ENCODE measurements at regions of chr10 and their contacts with region 1.

Region 1: GRCh38 chr10:13371897-13372470 is 23.9 kb upstream of the SEPHS1 start:
- DNase-seq: no peak
- ATAC-seq: peak; percentile 99
- H3K4me3 ChIP-seq: no peak overlapping the region
- H3K27ac ChIP-seq: no peak overlapping the region
- H3K4me1 ChIP-seq: no peaks in the 10 kb centered on the region
- H3K27me3 ChIP-seq: no peaks in the 10 kb centered on the region
- CTCF ChIP-seq: peak; percentile 90 to 99 (median 95)
- EP300 ChIP-seq: no peak
- POLR2A ChIP-seq: no peak
- RAD21 ChIP-seq: peak; percentile 97

Region 2: DNA sequence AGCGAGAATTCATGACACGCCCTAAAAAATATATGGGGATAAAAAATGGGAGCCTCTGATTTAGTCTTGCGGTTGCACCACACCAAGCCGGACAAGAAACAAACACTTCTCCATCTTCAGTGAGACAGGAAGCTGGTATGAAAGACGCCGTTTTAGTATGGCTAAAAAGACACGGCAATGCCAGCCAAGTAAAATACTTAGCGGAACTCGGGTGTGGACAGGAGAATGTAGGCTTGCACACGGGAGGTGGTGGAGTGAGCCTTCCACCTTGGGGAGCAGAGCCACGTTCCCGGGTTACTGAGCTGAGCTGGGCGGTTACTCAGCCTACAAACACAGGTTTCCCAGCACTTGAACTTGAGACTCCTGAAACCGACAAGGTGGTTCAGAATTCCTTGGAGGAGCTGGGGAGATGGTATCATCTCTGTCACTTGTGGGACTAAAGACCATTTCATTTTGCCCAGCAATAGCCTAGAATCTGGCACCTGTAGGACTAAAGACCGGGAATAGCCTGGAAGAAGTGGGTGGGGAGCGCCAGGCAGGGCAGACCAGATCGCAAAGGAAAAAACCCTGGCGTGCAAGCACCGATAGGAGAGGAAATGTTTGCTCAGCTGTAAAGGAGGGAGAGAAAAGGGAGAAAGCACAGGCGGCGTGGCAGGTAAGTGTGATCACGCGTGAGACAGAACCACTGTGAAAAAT is 10.9 kb after region 1 on chr10:
- CTCF ChIA-PET with region 1: interaction called, 12 read pairs
- POLR2A ChIA-PET with region 1: no interaction called
- RAD21 ChIA-PET with region 1: interaction called, 3 read pairs
- SMC1A ChIA-PET with region 1: interaction called, 5 read pairs
- in situ Hi-C with region 1: no loop called
- intact Hi-C with region 1: no loop called
- DNase-seq: no peak
- ATAC-seq: no peak
- H3K4me3 ChIP-seq: no peak overlapping the region
- H3K27ac ChIP-seq: no peak overlapping the region
- H3K4me1 ChIP-seq: no peaks in the 10 kb centered on the region
- H3K27me3 ChIP-seq: peaks cover 0 to 3% of the 10 kb centered on the region in 2 experiments; a peak in 1 of 4 replicates
- CTCF ChIP-seq: no peak
- EP300 ChIP-seq: no peak
- POLR2A ChIP-seq: no peak
- RAD21 ChIP-seq: no peak

Region 3: GRCh38 chr10:13440185-13441061 is 68.4 kb after region 1 on chr10:
- CTCF ChIA-PET with region 1: interaction called, 41 read pairs
- POLR2A ChIA-PET with region 1: no interaction called
- RAD21 ChIA-PET with region 1: interaction called, 9 read pairs
- SMC1A ChIA-PET with region 1: interaction called, 9 read pairs
- in situ Hi-C with region 1: loop called (anchors 5 kb)
- intact Hi-C with region 1: loop called (anchors 1 kb)
- DNase-seq: no peak
- ATAC-seq: peak; percentile 95
- H3K4me3 ChIP-seq: no peak overlapping the region
- H3K27ac ChIP-seq: no peak overlapping the region
- H3K4me1 ChIP-seq: 0 out of 2 replicates have a peak, but pooled peaks cover 3% of the 10 kb centered on the region
- H3K27me3 ChIP-seq: peaks cover 8 to 9% of the 10 kb centered on the region in 2 experiments; a peak in 3 of 4 replicates
- CTCF ChIP-seq: peak; percentile 72 to 81 (median 80)
- EP300 ChIP-seq: no peak
- POLR2A ChIP-seq: no peak
- RAD21 ChIP-seq: peak; percentile 50

Region 4: GRCh38 chr10:13518076-13518692 is 146.2 kb after region 1 on chr10:
- CTCF ChIA-PET with region 1: interaction called, 6 read pairs
- POLR2A ChIA-PET with region 1: no interaction called
- RAD21 ChIA-PET with region 1: no interaction called
- SMC1A ChIA-PET with region 1: interaction called, 3 read pairs
- in situ Hi-C with region 1: no loop called
- intact Hi-C with region 1: loop called (anchors 1 kb)
- DNase-seq: no peak
- ATAC-seq: peak; percentile 80
- H3K4me3 ChIP-seq: no peak overlapping the region
- H3K27ac ChIP-seq: no peak overlapping the region
- H3K4me1 ChIP-seq: no peaks in the 10 kb centered on the region
- H3K27me3 ChIP-seq: peaks cover 0 to 3% of the 10 kb centered on the region in 2 experiments; a peak in 1 of 4 replicates
- CTCF ChIP-seq: peak; percentile 4 to 55 (median 53); a peak in 4 of 6 replicates
- EP300 ChIP-seq: no peak
- POLR2A ChIP-seq: no peak
- RAD21 ChIP-seq: peak; percentile 37; the same call in 1 of the 2 replicates

Region 5: DNA sequence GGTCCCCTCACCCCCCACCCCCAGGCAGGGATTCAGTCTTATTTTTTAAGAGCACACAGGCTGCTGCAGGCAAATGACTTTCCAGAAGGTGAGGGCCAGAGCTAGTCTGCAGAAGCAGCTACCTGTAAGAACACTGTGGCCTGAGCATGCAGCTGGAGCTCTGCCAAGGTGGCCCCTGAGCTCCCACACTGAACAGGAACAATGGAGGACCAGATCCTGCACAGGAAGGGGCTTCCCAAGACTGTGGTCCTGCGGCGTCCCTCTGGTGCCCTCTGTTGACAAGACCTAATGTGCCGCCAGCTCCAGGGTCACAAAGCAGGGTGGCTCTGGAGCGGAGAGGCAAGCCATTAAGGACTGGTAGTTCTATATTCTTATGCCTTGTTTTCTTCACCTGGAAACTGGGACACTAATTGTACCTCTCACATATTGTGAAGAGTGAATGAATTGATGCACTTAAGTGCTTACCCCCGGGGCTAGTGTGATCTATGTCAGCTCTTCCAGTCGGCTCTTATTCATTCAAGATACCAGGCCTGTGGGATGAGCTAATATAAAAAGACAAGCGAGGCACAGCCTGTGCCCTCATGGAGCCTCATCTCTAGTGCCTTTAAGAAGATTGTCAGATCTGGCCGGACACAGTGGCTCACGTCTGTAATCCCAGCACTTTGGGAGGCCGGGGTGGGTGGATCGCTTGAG is 164.8 kb after region 1 on chr10:
- CTCF ChIA-PET with region 1: interaction called, 24 read pairs
- POLR2A ChIA-PET with region 1: no interaction called
- RAD21 ChIA-PET with region 1: interaction called, 12 read pairs
- SMC1A ChIA-PET with region 1: interaction called, 12 read pairs
- in situ Hi-C with region 1: loop called (anchors 5 kb)
- intact Hi-C with region 1: loop called (anchors 1 kb)
- DNase-seq: peak; percentile 16
- ATAC-seq: peak; percentile 98
- H3K4me3 ChIP-seq: no peak overlapping the region
- H3K27ac ChIP-seq: no peak overlapping the region
- H3K4me1 ChIP-seq: no peaks in the 10 kb centered on the region
- H3K27me3 ChIP-seq: 0 out of 4 replicates have a peak, but pooled peaks cover 0 to 3% of the 10 kb centered on the region in 2 experiments
- CTCF ChIP-seq: peak; percentile 69 to 79 (median 74)
- EP300 ChIP-seq: no peak
- POLR2A ChIP-seq: no peak
- RAD21 ChIP-seq: peak; percentile 67

Region 6: GRCh38 chr10:13586676-13587355 is 214.8 kb after region 1 on chr10 and contains the start of gene PRPF18:
- CTCF ChIA-PET with region 1: interaction called, 13 read pairs
- POLR2A ChIA-PET with region 1: no interaction called
- RAD21 ChIA-PET with region 1: interaction called, 4 read pairs
- SMC1A ChIA-PET with region 1: interaction called, 4 read pairs
- in situ Hi-C with region 1: no loop called
- intact Hi-C with region 1: loop called (anchors 1 kb)
- DNase-seq: peak; percentile 76
- ATAC-seq: peak; percentile 99
- H3K4me3 ChIP-seq: peak within 1 kb of the TSS; percentile 90
- H3K27ac ChIP-seq: peak within 1 kb of the TSS; percentile 61
- H3K4me1 ChIP-seq: no peaks in the 10 kb centered on the region
- H3K27me3 ChIP-seq: no peaks in the 10 kb centered on the region
- CTCF ChIP-seq: peak; percentile 98 to 99 (median 99)
- EP300 ChIP-seq: no peak
- POLR2A ChIP-seq: peak; percentile 87
- RAD21 ChIP-seq: 0 out of 2 replicates have a peak, but pooled peaks have one; percentile 24
- polyA plus RNA-seq, gene PRPF18: 28.6 to 35.8 TPM